ENCODE measurements at regions of chr1 and their contacts with region 1.

Region 1: DNA sequence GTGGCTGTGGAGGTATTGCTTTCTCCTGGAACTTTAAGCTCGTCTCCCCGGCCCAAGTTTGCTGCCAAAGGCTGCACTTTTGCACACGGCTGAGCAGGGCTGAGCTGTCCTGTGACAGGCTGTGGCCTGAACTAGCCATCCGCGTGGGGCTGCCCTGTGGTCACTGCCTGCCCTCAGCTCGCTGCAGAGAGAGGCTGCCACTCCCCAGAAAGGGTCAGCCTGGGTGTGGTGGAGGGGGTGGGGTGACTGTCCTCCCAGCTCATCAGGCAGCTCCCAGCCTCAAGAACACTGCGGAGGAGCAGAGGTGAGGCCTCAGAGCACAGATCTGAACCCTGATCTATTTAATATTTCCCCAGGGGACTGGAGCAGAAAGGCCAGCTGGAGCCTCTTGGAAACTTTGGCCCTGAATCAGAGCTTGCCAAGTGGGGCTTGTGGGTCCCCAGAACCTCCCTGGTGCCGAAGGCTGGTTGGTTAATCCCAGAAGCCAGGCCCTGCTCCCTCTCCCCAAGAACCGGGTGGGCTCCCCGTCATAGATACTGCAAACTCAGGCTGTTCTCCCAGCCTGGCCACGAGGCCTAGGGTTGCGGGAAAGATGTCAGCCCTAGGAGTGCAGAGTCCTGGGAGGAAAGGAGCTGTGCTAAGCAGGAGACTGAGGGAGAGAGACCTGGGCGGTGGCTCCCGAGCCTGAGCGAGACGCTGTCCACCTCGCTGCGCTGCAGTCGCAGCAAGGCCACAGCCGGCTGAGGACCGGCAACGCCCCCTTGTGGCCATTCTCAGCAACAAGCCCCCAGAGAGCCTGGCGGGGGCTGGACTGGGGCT is 125.1 kb upstream of the IPO9 start:
- DNase-seq: peak; percentile 65 to 94
- H3K4me3 ChIP-seq: no peak overlapping the region
- H3K27ac ChIP-seq: no peak overlapping the region
- H3K4me1 ChIP-seq: peaks cover 2 to 9% (median 5%) of the 10 kb centered on the region in 4 experiments; a peak in 5 of 7 replicates
- H3K27me3 ChIP-seq: no peaks in the 10 kb centered on the region
- CTCF ChIP-seq: peak; percentile 87 to 99 (median 98)
- EP300 ChIP-seq: no peak
- POLR2A ChIP-seq: no peak
- RAD21 ChIP-seq: peak; percentile 99 to 100

Region 2: GRCh38 chr1:201530741-201531531 is 172.9 kb before region 1 on chr1:
- CTCF ChIA-PET with region 1: interaction called, 41 read pairs
- POLR2A ChIA-PET with region 1: no interaction called
- DNase-seq: peak in 1 of 2 experiments; percentile 90
- H3K4me3 ChIP-seq: no peak overlapping the region
- H3K27ac ChIP-seq: no peak overlapping the region
- H3K4me1 ChIP-seq: peaks cover 0 to 5% (median 3%) of the 10 kb centered on the region in 4 experiments; a peak in 3 of 7 replicates
- H3K27me3 ChIP-seq: no peaks in the 10 kb centered on the region
- CTCF ChIP-seq: peak; percentile 88 to 92 (median 91)
- EP300 ChIP-seq: no peak
- POLR2A ChIP-seq: no peak
- RAD21 ChIP-seq: peak; percentile 96

Region 3: GRCh38 chr1:201582705-201583442 is 121.0 kb before region 1 on chr1:
- CTCF ChIA-PET with region 1: interaction called, 19 read pairs
- POLR2A ChIA-PET with region 1: interaction called, 3 read pairs
- DNase-seq: no peak
- H3K4me3 ChIP-seq: no peak overlapping the region
- H3K27ac ChIP-seq: no peak overlapping the region
- H3K4me1 ChIP-seq: peaks cover 0 to 6% (median 4%) of the 10 kb centered on the region in 4 experiments; a peak in 5 of 7 replicates
- H3K27me3 ChIP-seq: no peaks in the 10 kb centered on the region; a peak in 1 of 7 replicates
- CTCF ChIP-seq: no peak
- EP300 ChIP-seq: no peak
- POLR2A ChIP-seq: no peak
- RAD21 ChIP-seq: no peak

Region 4: GRCh38 chr1:201630582-201630981 is 73.2 kb before region 1 on chr1:
- CTCF ChIA-PET with region 1: interaction called, 11 read pairs
- POLR2A ChIA-PET with region 1: no interaction called
- DNase-seq: no peak
- H3K4me3 ChIP-seq: no peak overlapping the region
- H3K27ac ChIP-seq: no peak overlapping the region
- H3K4me1 ChIP-seq: peaks cover 0 to 7% (median 5%) of the 10 kb centered on the region in 4 experiments; a peak in 4 of 7 replicates
- H3K27me3 ChIP-seq: no peaks in the 10 kb centered on the region
- CTCF ChIP-seq: no peak
- EP300 ChIP-seq: no peak
- POLR2A ChIP-seq: no peak
- RAD21 ChIP-seq: no peak

Region 5: DNA sequence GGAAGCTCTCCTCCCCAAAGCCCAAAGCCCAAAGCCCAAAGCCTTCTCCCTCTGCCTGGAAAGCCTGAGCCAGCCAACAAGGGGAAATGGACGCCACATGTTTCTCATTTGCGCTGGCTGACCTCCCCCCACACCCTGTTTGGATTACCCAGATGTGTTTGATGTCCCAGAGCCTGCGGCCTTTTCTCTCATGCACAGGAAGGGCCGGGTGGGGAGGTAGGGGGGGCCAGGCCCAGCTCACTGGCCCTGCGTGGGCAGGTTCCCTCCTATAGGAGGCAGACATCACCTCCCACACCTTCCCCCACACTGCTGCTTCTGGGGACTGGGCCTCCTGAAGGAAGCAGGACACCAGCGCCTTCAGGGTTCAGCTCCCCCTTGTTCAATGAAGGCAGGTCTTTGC is 48.6 kb before region 1 on chr1:
- CTCF ChIA-PET with region 1: interaction called, 34 read pairs
- POLR2A ChIA-PET with region 1: interaction called, 5 read pairs
- DNase-seq: no peak
- H3K4me3 ChIP-seq: no peak overlapping the region
- H3K27ac ChIP-seq: no peak overlapping the region
- H3K4me1 ChIP-seq: peaks cover 9 to 27% (median 19%) of the 10 kb centered on the region in 4 experiments
- H3K27me3 ChIP-seq: peaks cover 0 to 5% (median 0%) of the 10 kb centered on the region in 4 experiments; a peak in 1 of 7 replicates
- CTCF ChIP-seq: peak; percentile 46 to 49 (median 48)
- EP300 ChIP-seq: no peak
- POLR2A ChIP-seq: no peak
- RAD21 ChIP-seq: peak; percentile 10 to 43; a peak in 3 of 4 replicates

Region 6: DNA sequence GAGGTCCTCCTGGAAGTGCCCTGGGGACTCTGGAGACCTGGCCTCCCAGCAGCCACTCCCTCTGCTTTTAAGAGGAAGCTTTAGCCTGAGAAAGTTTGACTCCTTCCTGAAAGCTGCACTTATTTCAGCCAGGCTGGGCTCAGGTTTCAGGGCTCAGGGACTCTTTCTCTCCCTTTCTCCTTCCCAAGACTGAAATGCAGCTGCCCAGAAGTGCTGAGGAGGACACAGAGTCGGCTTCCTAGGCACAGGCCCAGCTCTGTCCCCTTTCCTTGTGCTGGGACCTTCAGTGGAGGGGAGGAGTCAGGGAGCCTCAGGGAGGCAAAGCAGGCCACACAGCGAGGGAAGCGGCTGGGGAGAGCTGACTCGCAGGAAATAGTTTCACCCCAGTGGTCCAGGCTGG is 27.6 kb before region 1 on chr1:
- CTCF ChIA-PET with region 1: interaction called, 14 read pairs
- POLR2A ChIA-PET with region 1: interaction called, 4 read pairs
- DNase-seq: no peak
- H3K4me3 ChIP-seq: no peak overlapping the region
- H3K27ac ChIP-seq: peak overlapping the region; percentile 64; the same call in 1 of the 2 replicates
- H3K4me1 ChIP-seq: peaks cover 7 to 35% (median 24%) of the 10 kb centered on the region in 4 experiments
- H3K27me3 ChIP-seq: no peaks in the 10 kb centered on the region
- CTCF ChIP-seq: no peak
- EP300 ChIP-seq: no peak
- POLR2A ChIP-seq: no peak
- RAD21 ChIP-seq: no peak

Region 7: DNA sequence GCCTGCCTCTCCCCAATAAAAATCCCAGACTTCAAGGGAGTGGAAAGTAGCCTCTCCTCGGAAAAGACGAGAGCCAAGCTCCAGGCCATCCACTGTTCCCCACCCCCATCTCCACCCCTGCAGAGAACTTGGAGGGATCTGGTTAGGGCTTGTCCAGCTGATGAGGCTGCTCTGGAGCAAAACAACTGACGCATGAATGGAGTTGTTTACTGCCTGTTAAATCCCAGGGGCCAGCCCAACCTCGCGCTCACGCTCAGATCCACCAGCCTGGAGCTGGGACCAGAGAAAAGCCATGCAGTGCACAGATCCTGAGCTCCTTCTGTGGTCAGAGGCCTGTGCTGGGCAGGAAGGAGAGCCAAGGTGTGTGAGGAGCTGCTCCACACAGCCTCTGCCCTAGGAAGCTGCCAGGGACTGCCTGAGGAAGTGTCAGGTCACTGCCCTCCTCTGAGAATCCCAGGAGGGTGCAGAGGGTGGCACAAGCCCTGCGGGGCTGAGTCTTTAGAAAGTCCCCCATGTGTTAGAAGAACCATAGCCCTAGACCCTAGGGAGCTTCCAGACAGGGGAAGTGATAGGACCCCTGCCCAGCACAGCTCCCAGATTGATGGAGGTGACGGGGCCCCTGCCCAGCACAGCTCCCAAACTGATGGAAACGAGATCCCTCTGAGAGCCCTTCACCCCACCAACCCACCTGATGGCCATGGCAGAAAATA is 16.1 kb after region 1 on chr1:
- CTCF ChIA-PET with region 1: interaction called, 216 read pairs
- POLR2A ChIA-PET with region 1: no interaction called
- DNase-seq: no peak
- H3K4me3 ChIP-seq: no peak overlapping the region
- H3K27ac ChIP-seq: 0 out of 2 replicates have a peak overlapping the region, but pooled peaks have one; percentile 1
- H3K4me1 ChIP-seq: peaks cover 0 to 12% (median 6%) of the 10 kb centered on the region in 4 experiments; a peak in 6 of 7 replicates
- H3K27me3 ChIP-seq: no peaks in the 10 kb centered on the region
- CTCF ChIP-seq: no peak
- EP300 ChIP-seq: no peak
- POLR2A ChIP-seq: no peak
- RAD21 ChIP-seq: no peak